GM13977 (cell line): ENCODE measurements at regions of chr11 and their contacts with region 1.

Region 1: GRCh38 chr11:44538375-44539054 is 26.9 kb upstream of the CD82 start:
- DNase-seq: peak; percentile 89
- CTCF ChIP-seq: peak; percentile 97

Region 2: GRCh38 chr11:44110231-44110679 is 428.3 kb before region 1 on chr11:
- in situ Hi-C with region 1: loop called (anchors 25 kb)
- DNase-seq: peak; percentile 67
- CTCF ChIP-seq: peak; percentile 77

Region 3: GRCh38 chr11:44286268-44286880 is 252.1 kb before region 1 on chr11:
- in situ Hi-C with region 1: loop called (anchors 10 kb)
- DNase-seq: peak; percentile 87
- CTCF ChIP-seq: peak; percentile 99